Heart left ventricle (tissue), 16 donors: ENCODE measurements at regions of chr1 and their contacts with region 1.

Region 1: GRCh38 chr1:155167166-155168104 is 5.7 kb downstream of the KRTCAP2 start:
- DNase-seq: peak; percentile 90 to 94 (median 92)
- ATAC-seq: peak; percentile 77 to 83 (median 80)
- H3K4me3 ChIP-seq: peak overlapping the region in 8 of 12 donors; percentile 1 to 36 (median 26)
- H3K27ac ChIP-seq: peak overlapping the region in 11 of 12 donors; percentile 67 to 88 (median 76)
- H3K4me1 ChIP-seq: peaks cover 0 to 38% (median 32%) of the 10 kb centered on the region in 12 donors
- H3K27me3 ChIP-seq: peaks cover 0 to 8% (median 0%) of the 10 kb centered on the region in 9 donors
- CTCF ChIP-seq: peak; percentile 81 to 93 (median 90)
- POLR2A ChIP-seq: no peak

Region 2: GRCh38 chr1:155091071-155091709 is 76.2 kb before region 1 on chr1:
- intact Hi-C with region 1: loop called (anchors 1 to 2 kb)
- DNase-seq: peak; percentile 73 to 91 (median 80)
- ATAC-seq: peak in 3 of 4 donors; percentile 53 to 70 (median 65)
- H3K4me3 ChIP-seq: no peak overlapping the region
- H3K27ac ChIP-seq: no peak overlapping the region
- H3K4me1 ChIP-seq: peaks cover 7 to 34% (median 17%) of the 10 kb centered on the region in 12 donors
- H3K27me3 ChIP-seq: peaks cover 0 to 5% (median 0%) of the 10 kb centered on the region in 9 donors
- CTCF ChIP-seq: peak; percentile 95 to 99 (median 98)
- POLR2A ChIP-seq: no peak

Region 3: GRCh38 chr1:155127105-155127964 is 40.1 kb before region 1 on chr1 and contains the start of gene EFNA1:
- intact Hi-C with region 1: loop called (anchors 1 to 5 kb)
- DNase-seq: peak; percentile 74 to 88 (median 81)
- ATAC-seq: peak; percentile 39 to 76 (median 66)
- H3K4me3 ChIP-seq: peak within 1 kb of the TSS; percentile 68 to 95 (median 82)
- H3K27ac ChIP-seq: peak within 1 kb of the TSS; percentile 87 to 100 (median 96)
- H3K4me1 ChIP-seq: peaks cover 7 to 70% (median 42%) of the 10 kb centered on the region in 12 donors
- H3K27me3 ChIP-seq: peaks cover 0 to 35% (median 0%) of the 10 kb centered on the region in 9 donors
- CTCF ChIP-seq: no peak
- POLR2A ChIP-seq: peak in 1 of 2 donors; percentile 97
- total RNA-seq, gene EFNA1: 22.8 to 51.8 (median 37.2) TPM